ENCODE measurements at regions of chr6 and their contacts with region 1.

Region 1: DNA sequence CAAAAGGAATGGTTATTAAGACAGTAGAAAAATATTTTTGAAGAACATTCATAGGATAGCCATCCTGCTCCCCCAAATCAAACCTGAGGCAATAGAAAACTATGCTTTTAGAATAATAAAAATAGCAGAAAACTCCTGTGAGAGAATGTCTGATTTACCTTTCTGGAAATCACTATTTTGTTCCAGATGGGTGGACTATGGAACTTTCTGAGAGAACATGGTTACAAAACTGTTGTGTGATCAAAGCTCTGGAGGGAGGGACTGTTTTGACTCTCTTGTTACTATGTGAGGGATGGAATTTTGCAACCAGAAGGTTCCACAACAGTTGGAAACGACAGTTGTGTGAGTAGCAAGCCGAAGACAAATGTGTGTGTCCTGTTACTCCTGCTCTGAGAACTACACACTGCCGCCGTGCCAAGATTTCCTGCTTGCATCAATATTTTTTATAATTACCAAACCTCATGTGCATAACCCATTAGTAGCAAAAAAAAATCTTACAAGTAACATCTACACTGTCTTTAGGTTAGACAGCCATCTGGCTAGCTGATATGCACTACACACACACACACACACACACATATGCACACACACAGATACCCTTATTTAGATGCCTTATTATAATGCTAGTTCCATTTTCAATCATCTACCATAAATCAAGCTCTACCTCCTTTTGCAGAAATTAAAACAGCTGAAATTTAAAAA is 11.0 kb upstream of the HIVEP1 start:
- DNase-seq: peak; percentile 41 to 62
- ATAC-seq: peak in 2 of 4 donors; percentile 43 to 49
- H3K4me3 ChIP-seq: no peak overlapping the region
- H3K27ac ChIP-seq: no peak overlapping the region
- H3K4me1 ChIP-seq: no peaks in the 10 kb centered on the region
- H3K27me3 ChIP-seq: no peaks in the 10 kb centered on the region
- CTCF ChIP-seq: no peak

Region 2: DNA sequence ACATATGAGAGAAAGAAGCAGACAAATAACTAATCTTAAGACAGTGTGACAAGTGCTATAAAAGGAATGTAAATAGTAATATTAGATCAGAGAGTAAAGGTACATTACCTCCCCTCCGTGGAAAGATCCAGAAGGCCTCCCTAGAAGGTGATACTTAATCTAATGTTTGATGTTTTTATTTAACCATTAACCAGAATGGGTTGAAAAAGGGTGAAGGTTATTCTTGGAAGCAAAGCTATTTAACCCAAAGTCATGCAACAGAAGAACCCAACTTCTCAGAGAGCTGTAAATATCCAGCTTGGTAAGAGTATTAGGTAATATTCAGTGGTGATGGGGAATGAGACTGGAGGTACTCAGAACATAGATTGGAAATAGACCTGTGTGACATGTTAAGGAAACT is 57.0 kb before region 1 on chr6:
- intact Hi-C with region 1: loop called in 1 of 2 experiments (anchors 5 kb)
- DNase-seq: no peak
- ATAC-seq: no peak
- H3K4me3 ChIP-seq: no peak overlapping the region
- H3K27ac ChIP-seq: no peak overlapping the region
- H3K4me1 ChIP-seq: no peaks in the 10 kb centered on the region
- H3K27me3 ChIP-seq: peaks cover 0 to 2% (median 0%) of the 10 kb centered on the region in 3 donors
- CTCF ChIP-seq: no peak

Region 3: GRCh38 chr6:12051861-12052368 is 50.8 kb after region 1 on chr6:
- intact Hi-C with region 1: no loop called
- DNase-seq: no peak
- ATAC-seq: no peak
- H3K4me3 ChIP-seq: no peak overlapping the region
- H3K27ac ChIP-seq: no peak overlapping the region
- H3K4me1 ChIP-seq: no peaks in the 10 kb centered on the region
- H3K27me3 ChIP-seq: no peaks in the 10 kb centered on the region
- CTCF ChIP-seq: no peak